Activated CD4-positive, alpha-beta memory T cell treated with anti-CD3 and anti-CD28 coated beads, Interleukin-2, amount 10 ng/mL, durations not matched to agents 7 days and 5 days (primary cell): ENCODE measurements at regions of chr6 and their contacts with region 1.

Region 1: GRCh38 chr6:37432916-37433656 is at the start of gene CMTR1:
- DNase-seq: peak; percentile 98
- H3K4me3 Mint-ChIP-seq: peak within 1 kb of the TSS; percentile 89
- H3K27ac Mint-ChIP-seq: peak within 1 kb of the TSS; percentile 96
- H3K4me1 Mint-ChIP-seq: peaks cover 47% of the 10 kb centered on the region
- H3K27me3 Mint-ChIP-seq: peaks cover 4% of the 10 kb centered on the region
- total RNA-seq, gene CMTR1: 97.7 to 99.7 TPM

Region 2: GRCh38 chr6:37257634-37258404 is 175.3 kb before region 1 on chr6 and contains the starts of genes TBC1D22B and TMEM217:
- CTCF ChIA-PET with region 1: no interaction called
- POLR2A ChIA-PET with region 1: interaction called, 19 read pairs
- DNase-seq: peak; percentile 97
- H3K4me3 Mint-ChIP-seq: peak within 1 kb of the TSS; percentile 83
- H3K27ac Mint-ChIP-seq: peak within 1 kb of the TSS; percentile 86
- H3K4me1 Mint-ChIP-seq: peaks cover 44% of the 10 kb centered on the region
- H3K27me3 Mint-ChIP-seq: no peaks in the 10 kb centered on the region
- total RNA-seq, gene TBC1D22B: 16.5 TPM
- total RNA-seq, gene TMEM217: 1.6 to 2.1 TPM

Region 3: DNA sequence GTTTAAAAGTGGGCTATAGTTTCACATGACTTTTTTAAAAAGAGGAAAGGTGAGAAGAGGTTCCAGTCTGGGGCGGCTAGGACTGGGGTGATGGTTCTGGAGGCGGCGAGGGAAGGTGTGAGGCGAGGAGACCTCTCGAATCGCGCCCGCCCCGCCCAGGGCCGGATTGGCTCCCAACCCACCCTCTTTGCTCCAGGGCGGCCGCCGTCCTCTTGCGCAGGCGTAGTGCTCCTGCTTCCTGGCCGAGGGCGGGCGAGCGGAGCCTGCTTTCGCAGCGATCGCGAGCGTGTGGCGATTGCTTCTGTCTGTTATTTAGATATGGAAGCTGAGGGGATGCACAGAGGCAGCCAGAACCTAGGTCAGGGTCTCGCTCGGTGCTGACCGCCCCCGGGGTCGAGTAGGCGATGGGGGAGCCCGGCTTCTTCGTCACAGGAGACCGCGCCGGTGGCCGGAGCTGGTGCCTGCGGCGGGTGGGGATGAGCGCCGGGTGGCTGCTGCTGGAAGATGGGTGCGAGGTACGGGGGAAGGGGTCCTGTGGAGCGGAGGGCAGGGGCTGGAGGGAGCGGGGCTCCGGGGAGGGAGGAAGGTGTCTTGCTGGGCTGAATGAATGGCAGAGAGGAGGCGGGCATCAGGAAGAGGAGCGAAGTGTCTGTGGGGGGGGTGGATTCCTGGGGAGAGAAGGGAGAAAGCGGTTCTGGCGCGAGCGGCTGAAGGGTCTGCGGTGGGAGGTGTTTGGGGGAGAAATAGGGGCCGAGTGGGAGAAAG is 79.1 kb before region 1 on chr6 and contains the start of gene RNF8:
- CTCF ChIA-PET with region 1: no interaction called
- POLR2A ChIA-PET with region 1: interaction called, 11 read pairs
- DNase-seq: peak; percentile 93
- H3K4me3 Mint-ChIP-seq: peak within 1 kb of the TSS; percentile 93
- H3K27ac Mint-ChIP-seq: peak within 1 kb of the TSS; percentile 80
- H3K4me1 Mint-ChIP-seq: peaks cover 26% of the 10 kb centered on the region
- H3K27me3 Mint-ChIP-seq: no peaks in the 10 kb centered on the region
- total RNA-seq, gene RNF8: 23.5 to 24.0 TPM

Region 4: GRCh38 chr6:37454420-37455140 is 21.5 kb after region 1 on chr6:
- CTCF ChIA-PET with region 1: no interaction called
- POLR2A ChIA-PET with region 1: interaction called, 13 read pairs
- DNase-seq: no peak
- H3K4me3 Mint-ChIP-seq: no peak overlapping the region
- H3K27ac Mint-ChIP-seq: no peak overlapping the region
- H3K4me1 Mint-ChIP-seq: peaks cover 5% of the 10 kb centered on the region
- H3K27me3 Mint-ChIP-seq: no peaks in the 10 kb centered on the region

Region 5: GRCh38 chr6:37499433-37500293 is 66.6 kb after region 1 on chr6 and contains the start of gene CCDC167:
- CTCF ChIA-PET with region 1: interaction called, 3 read pairs
- POLR2A ChIA-PET with region 1: interaction called, 20 read pairs
- DNase-seq: peak; percentile 97
- H3K4me3 Mint-ChIP-seq: peak within 1 kb of the TSS; percentile 96
- H3K27ac Mint-ChIP-seq: peak within 1 kb of the TSS; percentile 90
- H3K4me1 Mint-ChIP-seq: peaks cover 83% of the 10 kb centered on the region
- H3K27me3 Mint-ChIP-seq: no peaks in the 10 kb centered on the region
- total RNA-seq, gene CCDC167: 52.2 to 55.0 TPM

Region 6: GRCh38 chr6:37516076-37516919 is 83.2 kb after region 1 on chr6:
- CTCF ChIA-PET with region 1: no interaction called
- POLR2A ChIA-PET with region 1: interaction called, 31 read pairs
- DNase-seq: peak; percentile 89
- H3K4me3 Mint-ChIP-seq: peak overlapping the region; percentile 78
- H3K27ac Mint-ChIP-seq: peak overlapping the region; percentile 99
- H3K4me1 Mint-ChIP-seq: peaks cover 69% of the 10 kb centered on the region
- H3K27me3 Mint-ChIP-seq: no peaks in the 10 kb centered on the region

Region 7: DNA sequence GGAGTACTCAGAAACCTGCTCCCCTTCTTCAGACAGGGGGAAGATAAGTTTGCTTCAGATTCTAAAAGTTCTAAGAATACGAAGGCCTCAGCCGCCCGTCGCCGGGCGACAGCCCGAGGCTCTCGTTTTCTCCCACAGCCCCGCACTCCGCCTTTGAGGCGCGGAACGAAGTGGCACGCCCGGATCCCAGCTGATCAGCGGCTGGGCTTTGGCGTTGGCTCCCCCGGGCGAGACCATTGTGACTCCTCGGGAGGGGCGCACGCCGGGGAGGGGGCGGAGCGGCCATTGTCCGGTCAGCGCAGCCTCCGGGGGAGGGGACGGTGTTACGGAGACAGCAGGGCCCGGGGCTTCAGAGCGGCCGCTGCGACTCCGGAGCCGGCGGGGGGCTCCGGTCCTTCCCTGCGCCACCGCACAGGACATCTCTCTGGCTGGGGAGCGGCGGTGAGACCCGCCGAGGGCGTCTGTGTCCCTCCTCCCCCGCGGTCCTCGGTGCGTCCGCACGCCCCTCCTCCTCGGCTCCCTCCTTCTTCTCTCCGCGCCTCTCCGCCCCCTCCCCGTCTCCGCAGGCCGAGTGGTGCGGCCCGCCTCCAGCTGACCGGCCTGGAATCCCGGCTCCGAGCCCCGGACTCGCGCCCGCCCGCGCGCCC is 386.2 kb after region 1 on chr6 and contains the start of gene ZFAND3:
- CTCF ChIA-PET with region 1: interaction called, 4 read pairs
- POLR2A ChIA-PET with region 1: interaction called, 10 read pairs
- DNase-seq: peak; percentile 95
- H3K4me3 Mint-ChIP-seq: peak within 1 kb of the TSS; percentile 97
- H3K27ac Mint-ChIP-seq: peak within 1 kb of the TSS; percentile 96
- H3K4me1 Mint-ChIP-seq: peaks cover 45% of the 10 kb centered on the region
- H3K27me3 Mint-ChIP-seq: peaks cover 4% of the 10 kb centered on the region
- total RNA-seq, gene ZFAND3: 35.2 to 38.2 TPM